ENCODE measurements at regions of chr1 and their contacts with region 1.

Region 1: DNA sequence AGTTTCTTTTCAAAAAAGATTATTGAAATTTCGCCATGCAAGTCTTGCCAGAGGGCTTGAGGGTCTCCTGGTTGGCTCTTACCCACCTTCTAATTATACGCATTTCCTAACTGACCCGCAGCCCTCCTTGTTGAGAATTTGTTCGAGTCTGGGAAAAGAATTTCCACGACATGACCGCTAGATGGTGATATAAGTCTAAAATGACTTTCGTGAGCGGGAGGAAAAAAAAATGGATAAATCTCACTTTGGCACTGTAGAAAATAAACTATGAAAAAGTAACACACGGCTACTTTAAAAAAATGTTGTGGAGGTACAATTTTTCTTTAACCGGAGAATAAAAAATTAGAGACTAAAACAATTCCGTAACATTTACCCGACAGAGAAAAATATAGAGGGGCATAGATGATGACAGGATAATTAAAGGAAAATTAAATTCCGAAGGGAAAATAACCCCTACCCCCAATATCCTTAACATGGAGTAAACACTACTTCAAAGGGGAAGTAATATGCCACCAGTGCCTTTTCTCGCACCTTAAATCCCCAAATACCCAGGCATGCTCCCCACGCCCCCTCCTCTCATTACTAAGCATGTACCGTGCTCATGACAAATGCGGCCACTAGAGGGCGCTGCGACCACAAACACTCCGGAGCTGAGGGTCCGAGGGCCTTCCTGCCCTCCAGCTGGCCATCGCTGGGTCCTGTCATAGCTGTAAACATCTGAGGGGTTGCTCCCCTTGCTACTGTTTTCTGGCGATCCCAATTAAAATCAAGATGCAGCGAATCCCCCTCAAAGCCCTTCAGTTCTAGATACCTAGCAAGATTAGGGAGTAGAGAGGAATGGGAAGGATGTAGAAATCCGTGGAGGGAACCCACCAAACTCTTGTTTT is 266.9 kb downstream of the ASTN1 start:
- DNase-seq: peak; percentile 70 to 94
- H3K4me3 ChIP-seq: peak overlapping the region in 3 of 4 experiments; percentile 10 to 59 (median 22); a peak in 5 of 8 replicates
- H3K27ac ChIP-seq: no peak overlapping the region
- H3K4me1 ChIP-seq: no peaks in the 10 kb centered on the region
- H3K27me3 ChIP-seq: no peaks in the 10 kb centered on the region; a peak in 1 of 7 replicates
- CTCF ChIP-seq: peak; percentile 84 to 89 (median 87)
- EP300 ChIP-seq: no peak
- POLR2A ChIP-seq: no peak
- RAD21 ChIP-seq: peak; percentile 89 to 92

Region 2: DNA sequence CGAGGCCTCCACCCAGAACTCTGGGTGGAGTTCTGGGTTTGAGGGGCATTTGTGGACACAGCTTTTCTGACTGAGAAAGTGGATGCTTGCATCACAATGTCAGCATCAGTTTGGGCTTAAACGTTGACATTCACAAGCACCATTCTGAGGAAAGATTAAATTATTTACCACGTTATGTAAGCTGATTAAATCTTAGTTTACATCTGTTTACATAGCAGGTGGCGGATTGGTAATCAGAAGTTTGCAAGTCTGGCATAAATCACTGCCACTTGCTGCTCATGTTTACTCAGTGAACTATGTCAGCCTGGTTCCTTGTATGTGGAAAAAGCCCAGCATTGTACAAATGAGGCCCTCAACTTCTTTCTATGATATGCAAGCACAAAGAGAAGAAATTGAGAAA is 124.6 kb before region 1 on chr1:
- CTCF ChIA-PET with region 1: no interaction called
- POLR2A ChIA-PET with region 1: no interaction called
- DNase-seq: no peak
- H3K4me3 ChIP-seq: no peak overlapping the region
- H3K27ac ChIP-seq: no peak overlapping the region
- H3K4me1 ChIP-seq: no peaks in the 10 kb centered on the region
- H3K27me3 ChIP-seq: no peaks in the 10 kb centered on the region
- CTCF ChIP-seq: no peak
- EP300 ChIP-seq: no peak
- POLR2A ChIP-seq: no peak
- RAD21 ChIP-seq: no peak

Region 3: GRCh38 chr1:176854758-176855745 is 42.5 kb before region 1 on chr1:
- CTCF ChIA-PET with region 1: no interaction called
- POLR2A ChIA-PET with region 1: no interaction called
- DNase-seq: no peak
- H3K4me3 ChIP-seq: no peak overlapping the region
- H3K27ac ChIP-seq: no peak overlapping the region
- H3K4me1 ChIP-seq: no peaks in the 10 kb centered on the region
- H3K27me3 ChIP-seq: no peaks in the 10 kb centered on the region
- CTCF ChIP-seq: no peak
- EP300 ChIP-seq: no peak
- POLR2A ChIP-seq: no peak
- RAD21 ChIP-seq: no peak

Region 4: DNA sequence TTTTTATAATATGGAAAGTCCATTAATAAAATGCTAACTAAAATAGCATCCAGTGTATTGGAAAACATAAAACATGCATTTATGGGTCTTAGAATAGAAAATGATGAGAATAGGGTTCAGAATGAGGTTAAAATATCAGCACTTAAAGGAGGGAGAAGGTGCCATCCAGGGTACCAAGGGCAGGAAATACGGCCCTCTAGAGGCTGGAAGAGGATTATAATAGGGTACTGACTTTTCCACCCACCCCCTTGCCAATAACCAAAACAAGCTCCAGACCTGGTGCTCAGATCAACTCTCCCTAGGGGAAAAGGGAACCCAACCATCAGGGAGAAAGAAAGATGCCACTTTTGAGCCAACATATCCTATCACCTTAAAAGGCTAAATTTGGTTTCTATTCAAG is 240.2 kb after region 1 on chr1:
- CTCF ChIA-PET with region 1: interaction called, 10 read pairs
- POLR2A ChIA-PET with region 1: no interaction called
- DNase-seq: no peak
- H3K4me3 ChIP-seq: no peak overlapping the region
- H3K27ac ChIP-seq: no peak overlapping the region
- H3K4me1 ChIP-seq: peaks cover 0 to 2% (median 1%) of the 10 kb centered on the region in 4 experiments; a peak in 2 of 7 replicates
- H3K27me3 ChIP-seq: no peaks in the 10 kb centered on the region
- CTCF ChIP-seq: peak; percentile 7 to 58 (median 49)
- EP300 ChIP-seq: no peak
- POLR2A ChIP-seq: no peak
- RAD21 ChIP-seq: peak; percentile 49 to 62

Region 5: GRCh38 chr1:177164380-177165068 is 266.9 kb after region 1 on chr1 and contains the start of gene ASTN1:
- CTCF ChIA-PET with region 1: interaction called, 17 read pairs
- POLR2A ChIA-PET with region 1: interaction called, 3 read pairs
- DNase-seq: peak in 1 of 2 experiments; percentile 78
- H3K4me3 ChIP-seq: peak within 1 kb of the TSS; percentile 80 to 86 (median 82)
- H3K27ac ChIP-seq: no peak within 1 kb of the TSS
- H3K4me1 ChIP-seq: peaks cover 0 to 5% (median 4%) of the 10 kb centered on the region in 4 experiments; a peak in 4 of 7 replicates
- H3K27me3 ChIP-seq: peaks cover 7 to 42% (median 34%) of the 10 kb centered on the region in 4 experiments
- CTCF ChIP-seq: no peak
- EP300 ChIP-seq: no peak
- POLR2A ChIP-seq: no peak
- RAD21 ChIP-seq: 0 out of 4 replicates have a peak, but pooled peaks of 1 of the 2 experiments have one; percentile 2
- total RNA-seq, gene ASTN1: 4.1 and 4.3 TPM in 2 replicates